Cardiac septum (tissue), 1 donor: ENCODE measurements at regions of chr1 and their contacts with region 1.

Region 1: DNA sequence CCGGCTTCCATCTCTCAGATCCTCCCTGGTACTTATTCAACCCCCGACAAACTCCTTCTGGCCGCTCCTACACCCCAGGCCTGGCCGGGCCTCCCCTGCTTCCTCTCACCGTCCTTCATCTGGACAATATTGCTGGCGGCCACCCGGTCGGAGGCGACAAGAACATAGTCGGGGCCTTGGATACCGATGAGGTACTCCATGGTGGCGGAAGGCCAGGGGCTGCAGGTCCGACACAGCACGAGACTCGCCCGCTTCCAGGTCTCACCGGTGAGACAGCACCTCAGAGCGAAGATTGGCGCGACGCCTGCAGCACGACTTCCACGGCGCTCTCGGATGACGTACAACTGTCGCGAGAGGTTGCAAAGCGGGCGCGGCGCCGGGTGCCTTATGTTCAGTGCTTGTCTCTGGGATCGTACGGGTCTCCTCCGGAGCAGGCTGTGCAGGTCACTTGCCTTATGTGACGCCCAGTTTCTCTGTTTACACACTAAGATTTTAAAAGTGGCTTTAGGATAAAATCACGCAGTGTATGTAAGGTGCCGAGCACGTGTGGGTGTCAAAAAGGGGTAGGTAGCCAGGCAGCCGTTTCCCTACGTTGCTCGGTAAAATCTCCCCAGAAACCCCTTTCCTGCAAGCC is at the start of gene PSMB2:
- DNase-seq: peak; percentile 97
- total RNA-seq, gene PSMB2: 35.6 TPM

Region 2: GRCh38 chr1:35715568-35716002 is 74.2 kb after region 1 on chr1:
- intact Hi-C with region 1: loop called (anchors 5 kb)
- DNase-seq: peak; percentile 82

Region 3: GRCh38 chr1:35763201-35763600 is 121.9 kb after region 1 on chr1:
- intact Hi-C with region 1: no loop called
- DNase-seq: no peak